Psoas muscle (tissue), 8 donors: ENCODE measurements at regions of chr2 and their contacts with region 1.

Region 1: DNA sequence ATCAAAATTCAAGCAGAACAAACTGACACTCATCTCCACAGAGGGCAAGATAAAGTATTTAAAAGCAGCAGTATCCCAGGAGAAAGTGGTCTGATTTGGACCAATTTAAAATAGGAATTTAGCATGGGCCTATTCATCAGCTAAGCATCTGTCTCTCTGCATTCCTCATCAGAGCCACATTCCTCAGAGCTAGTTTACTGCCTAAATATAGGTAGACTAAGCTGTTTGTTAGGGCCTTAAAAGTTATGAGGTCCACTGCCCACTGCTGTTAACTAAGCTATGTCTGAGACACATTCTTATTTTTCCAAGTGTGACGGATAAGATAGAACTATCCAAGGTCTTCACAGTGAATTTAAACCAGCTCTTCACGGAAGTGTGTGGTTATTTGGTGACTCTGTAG is 17.6 kb downstream of the NEB start:
- DNase-seq: no peak
- ATAC-seq: peak in 1 of 4 donors; percentile 18
- H3K4me3 ChIP-seq: no peak overlapping the region
- H3K27ac ChIP-seq: peak overlapping the region; percentile 93
- H3K4me1 ChIP-seq: peaks cover 73% of the 10 kb centered on the region
- H3K27me3 ChIP-seq: no peaks in the 10 kb centered on the region
- CTCF ChIP-seq: no peak

Region 2: GRCh38 chr2:151786483-151786882 is 69.8 kb after region 1 on chr2:
- intact Hi-C with region 1: loop called (anchors 5 kb)
- DNase-seq: no peak
- ATAC-seq: peak; percentile 76 to 89 (median 82)
- H3K4me3 ChIP-seq: peak overlapping the region; percentile 52
- H3K27ac ChIP-seq: peak overlapping the region; percentile 90
- H3K4me1 ChIP-seq: peaks cover 22% of the 10 kb centered on the region
- H3K27me3 ChIP-seq: no peaks in the 10 kb centered on the region
- CTCF ChIP-seq: no peak

Region 3: GRCh38 chr2:151792589-151792988 is 75.9 kb after region 1 on chr2:
- intact Hi-C with region 1: loop called (anchors 5 kb)
- DNase-seq: no peak
- ATAC-seq: peak in 2 of 4 donors; percentile 57 to 63
- H3K4me3 ChIP-seq: no peak overlapping the region
- H3K27ac ChIP-seq: no peak overlapping the region
- H3K4me1 ChIP-seq: peaks cover 20% of the 10 kb centered on the region
- H3K27me3 ChIP-seq: no peaks in the 10 kb centered on the region
- CTCF ChIP-seq: peak; percentile 30

Region 4: DNA sequence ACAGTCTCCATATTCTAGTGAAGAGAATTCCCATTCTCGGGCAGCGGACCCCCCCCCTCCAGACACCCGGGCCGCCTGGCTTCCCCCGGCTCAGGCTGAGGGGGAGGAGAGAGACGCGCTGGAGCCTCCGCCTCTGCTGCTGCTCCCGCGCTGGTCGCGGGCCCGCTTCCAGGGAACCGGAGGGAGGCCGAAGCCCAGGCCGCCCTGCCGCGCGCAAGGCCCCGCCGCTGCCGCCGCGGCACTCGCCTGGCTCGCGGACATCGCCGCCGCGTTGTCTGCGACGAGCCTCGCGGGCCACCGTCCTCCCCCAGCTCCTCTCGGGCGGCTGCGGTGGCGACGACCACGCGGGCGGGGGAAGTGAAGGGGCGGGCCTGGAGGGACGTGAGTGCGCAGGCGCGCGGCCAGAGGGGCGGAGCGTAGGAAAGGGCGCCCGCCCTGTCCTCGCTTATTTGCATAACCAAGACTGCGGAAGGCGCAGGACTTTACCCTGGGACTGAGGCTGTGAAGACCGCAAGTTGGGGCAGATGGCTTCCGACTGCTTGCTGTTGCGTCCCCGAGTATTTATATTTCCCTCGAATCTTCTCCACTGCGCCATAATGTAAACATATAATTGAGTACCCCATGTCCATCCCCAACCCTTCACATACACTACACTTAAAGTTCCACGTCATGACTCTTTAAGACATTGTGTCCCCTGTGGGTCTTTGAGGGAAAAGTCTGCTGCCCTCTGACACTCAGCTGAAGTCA is 111.6 kb after region 1 on chr2 and contains the start of gene ARL5A:
- intact Hi-C with region 1: loop called in 1 of 2 experiments (anchors 10 kb)
- DNase-seq: peak; percentile 94 to 98
- ATAC-seq: peak; percentile 93 to 98 (median 95)
- H3K4me3 ChIP-seq: peak within 1 kb of the TSS; percentile 87
- H3K27ac ChIP-seq: peak within 1 kb of the TSS; percentile 93
- H3K4me1 ChIP-seq: peaks cover 44% of the 10 kb centered on the region
- H3K27me3 ChIP-seq: no peaks in the 10 kb centered on the region
- CTCF ChIP-seq: no peak
- total RNA-seq, gene ARL5A: 42.5 to 71.9 (median 51.7) TPM